Panc1 (cell line): ENCODE measurements at regions of chr6 and their contacts with region 1.

Region 1: DNA sequence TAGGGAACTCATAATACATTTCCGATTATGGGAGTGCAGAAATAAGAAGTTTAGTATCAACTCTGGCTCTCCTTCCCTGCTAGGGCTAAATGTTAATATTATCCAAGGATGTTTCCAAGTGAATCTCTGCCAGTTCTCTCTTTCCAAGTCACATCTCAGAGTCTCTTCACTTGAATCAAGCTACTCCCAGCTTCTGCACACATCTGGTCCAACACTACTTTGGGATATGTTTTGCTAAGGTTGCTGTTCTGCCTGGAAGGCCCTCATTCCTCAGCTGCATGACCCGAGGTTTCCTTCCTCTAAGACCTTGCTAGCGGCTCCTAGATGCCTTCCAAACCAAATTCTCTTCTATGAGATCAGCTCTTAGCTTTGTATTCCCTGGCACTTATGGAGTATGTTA is 331.8 kb downstream of the GJA1 start:
- DNase-seq: no peak
- ATAC-seq: no peak
- H3K4me3 ChIP-seq: no peak overlapping the region
- H3K27ac ChIP-seq: no peak overlapping the region
- H3K4me1 ChIP-seq: no peaks in the 10 kb centered on the region
- H3K27me3 ChIP-seq: no peaks in the 10 kb centered on the region
- CTCF ChIP-seq: no peak

Region 2: GRCh38 chr6:121608270-121608669 is 158.9 kb before region 1 on chr6:
- CTCF ChIA-PET with region 1: interaction called, 14 read pairs
- POLR2A ChIA-PET with region 1: no interaction called
- in situ Hi-C with region 1: no loop called
- intact Hi-C with region 1: no loop called
- DNase-seq: peak; percentile 13
- ATAC-seq: no peak
- H3K4me3 ChIP-seq: no peak overlapping the region
- H3K27ac ChIP-seq: no peak overlapping the region
- H3K4me1 ChIP-seq: no peaks in the 10 kb centered on the region
- H3K27me3 ChIP-seq: no peaks in the 10 kb centered on the region
- CTCF ChIP-seq: no peak

Region 3: DNA sequence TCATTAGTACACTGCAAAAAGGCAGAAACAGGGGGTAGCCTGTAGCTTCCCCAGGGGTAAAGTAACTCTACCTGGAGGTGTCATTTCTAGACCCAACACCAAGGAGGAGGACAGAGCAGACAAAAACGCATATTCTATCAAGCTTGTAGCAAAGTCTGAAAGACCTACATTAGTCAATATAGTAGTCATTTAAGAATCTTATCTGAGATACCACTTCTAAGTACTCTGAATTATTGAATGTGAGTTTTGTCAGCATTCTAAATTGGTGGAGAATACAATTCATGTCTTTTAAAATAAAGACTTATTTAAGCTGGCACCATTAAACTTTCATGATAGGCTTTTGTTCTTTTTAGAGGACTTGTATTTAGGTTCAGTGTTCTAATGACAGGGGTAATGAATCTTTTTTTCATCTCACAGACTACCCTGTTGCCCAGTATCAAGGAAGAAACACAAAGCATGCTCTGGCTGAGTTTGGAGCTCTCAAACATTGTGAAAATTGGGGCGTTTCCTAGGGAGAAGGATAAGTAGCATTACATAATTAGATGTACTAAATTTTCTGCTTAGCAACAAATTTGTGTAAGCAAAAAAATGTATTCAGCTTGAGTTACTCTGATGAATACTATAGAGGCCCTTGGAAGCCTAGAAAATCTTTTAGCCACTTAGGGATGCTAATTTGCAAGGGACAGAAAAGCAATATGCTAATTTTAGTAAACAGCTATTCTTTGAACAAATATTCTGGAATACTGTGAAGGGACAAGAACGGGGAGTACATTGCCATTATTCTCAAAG is 376.8 kb after region 1 on chr6:
- CTCF ChIA-PET with region 1: no interaction called
- POLR2A ChIA-PET with region 1: no interaction called
- in situ Hi-C with region 1: no loop called
- intact Hi-C with region 1: no loop called
- DNase-seq: no peak
- ATAC-seq: no peak
- H3K4me3 ChIP-seq: no peak overlapping the region
- H3K27ac ChIP-seq: no peak overlapping the region
- H3K4me1 ChIP-seq: no peaks in the 10 kb centered on the region
- H3K27me3 ChIP-seq: no peaks in the 10 kb centered on the region
- CTCF ChIP-seq: no peak